SK-N-SH (cell line): ENCODE measurements at regions of chr20 and their contacts with region 1.

Region 1: DNA sequence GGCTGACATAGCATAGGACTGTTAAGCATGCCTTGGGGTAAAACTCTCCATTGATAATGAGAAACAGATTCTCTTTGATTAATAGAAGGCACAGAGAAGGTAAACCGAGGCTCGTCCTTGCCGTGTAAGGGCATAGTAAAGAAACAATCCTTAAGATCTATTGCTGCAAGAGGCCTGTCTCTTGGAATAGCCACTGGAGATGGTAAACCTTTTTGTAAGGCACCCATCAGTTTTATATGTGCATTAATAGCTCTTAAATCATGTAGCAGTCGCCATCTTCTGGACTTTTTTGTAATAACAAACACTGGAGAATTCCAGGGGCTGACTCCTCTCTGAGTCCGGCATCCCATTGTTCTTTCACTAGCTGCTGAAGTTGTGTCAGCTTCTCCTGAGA is 8.4 kb upstream of the ABHD12 start:
- DNase-seq: peak; percentile 68
- H3K4me3 ChIP-seq: no peak overlapping the region
- H3K27ac ChIP-seq: no peak overlapping the region
- H3K4me1 ChIP-seq: 0 out of 4 replicates have a peak, but pooled peaks cover 0 to 3% of the 10 kb centered on the region in 2 experiments
- H3K27me3 ChIP-seq: no peaks in the 10 kb centered on the region
- CTCF ChIP-seq: peak; percentile 71
- EP300 ChIP-seq: no peak
- RAD21 ChIP-seq: peak; percentile 87

Region 2: GRCh38 chr20:25247956-25248785 is 150.9 kb before region 1 on chr20 and contains the start of gene PYGB:
- CTCF ChIA-PET with region 1: interaction called, 28 read pairs
- POLR2A ChIA-PET with region 1: interaction called, 3 read pairs
- DNase-seq: peak; percentile 98
- H3K4me3 ChIP-seq: peak within 1 kb of the TSS; percentile 92 to 98
- H3K27ac ChIP-seq: peak within 1 kb of the TSS; percentile 86 to 93
- H3K4me1 ChIP-seq: peaks cover 11 to 47% of the 10 kb centered on the region in 2 experiments
- H3K27me3 ChIP-seq: no peaks in the 10 kb centered on the region
- CTCF ChIP-seq: no peak
- EP300 ChIP-seq: no peak
- RAD21 ChIP-seq: no peak
- polyA plus RNA-seq, gene PYGB: 32.2 and 35.8 TPM in 2 replicates

Region 3: DNA sequence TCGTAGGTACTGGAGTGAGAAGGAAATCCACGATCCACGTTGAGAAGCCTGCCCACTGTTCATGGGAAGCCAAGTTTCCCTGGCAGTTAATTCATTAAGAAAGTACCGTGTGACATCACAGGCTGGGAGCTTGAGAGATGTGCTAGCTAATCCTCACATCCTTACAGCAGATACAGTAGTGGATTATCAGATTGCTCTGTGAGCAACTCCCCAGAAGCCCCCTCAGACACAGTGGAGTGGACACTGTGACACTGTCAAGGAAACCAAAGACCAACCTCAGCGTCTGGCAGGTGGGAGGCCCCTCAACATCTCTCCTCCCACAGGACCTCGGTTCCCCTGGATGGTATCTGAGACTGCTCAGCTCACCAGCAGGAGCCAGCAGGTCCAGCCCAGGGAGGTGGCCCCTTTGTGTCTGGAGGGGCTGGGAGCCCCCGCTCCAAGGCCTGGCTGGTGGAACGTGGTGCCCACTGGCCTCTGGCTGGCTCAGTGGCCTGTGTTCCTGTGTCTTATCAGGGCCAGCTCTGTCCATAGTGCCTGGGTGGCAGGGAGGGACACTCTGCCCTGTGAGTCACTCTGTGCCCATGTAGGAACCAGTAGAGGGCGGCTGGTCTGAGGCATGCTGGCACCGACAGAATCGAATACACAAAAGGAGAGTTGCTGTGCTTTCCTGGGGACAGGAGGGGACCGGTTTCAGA is 143.9 kb before region 1 on chr20:
- CTCF ChIA-PET with region 1: interaction called, 28 read pairs
- POLR2A ChIA-PET with region 1: interaction called, 3 read pairs
- DNase-seq: peak; percentile 68
- H3K4me3 ChIP-seq: no peak overlapping the region
- H3K27ac ChIP-seq: peak overlapping the region in 1 of 2 experiments; percentile 69; a peak in 2 of 4 replicates
- H3K4me1 ChIP-seq: peaks cover 9 to 54% of the 10 kb centered on the region in 2 experiments
- H3K27me3 ChIP-seq: no peaks in the 10 kb centered on the region
- CTCF ChIP-seq: no peak; the same call in 1 of the 2 replicates
- EP300 ChIP-seq: no peak
- RAD21 ChIP-seq: peak; percentile 42

Region 4: DNA sequence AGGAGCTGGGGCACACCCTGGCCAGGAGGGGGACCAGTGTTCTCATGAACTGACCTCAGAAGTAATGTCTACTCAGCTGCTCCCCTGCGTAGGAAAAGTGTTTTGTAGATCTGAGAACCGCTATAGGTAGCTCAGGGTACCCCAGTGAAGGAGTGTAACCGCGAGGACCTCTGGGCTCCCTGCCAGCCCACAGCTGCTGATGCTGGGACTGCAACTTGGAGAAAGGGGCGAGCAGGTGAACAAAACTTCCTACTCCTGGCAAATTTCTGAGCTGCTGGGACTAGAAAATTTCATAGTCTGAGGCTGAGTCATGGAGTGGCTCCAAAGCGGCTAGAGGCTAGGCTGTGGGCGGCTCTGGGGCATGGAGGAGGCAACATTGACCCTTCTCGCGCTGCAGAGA is 99.2 kb before region 1 on chr20:
- CTCF ChIA-PET with region 1: interaction called, 104 read pairs
- POLR2A ChIA-PET with region 1: no interaction called
- DNase-seq: no peak
- H3K4me3 ChIP-seq: no peak overlapping the region
- H3K27ac ChIP-seq: peak overlapping the region in 1 of 2 experiments; percentile 25; a peak in 1 of 4 replicates
- H3K4me1 ChIP-seq: peaks cover 3 to 18% of the 10 kb centered on the region in 2 experiments; a peak in 1 of 4 replicates
- H3K27me3 ChIP-seq: no peaks in the 10 kb centered on the region
- CTCF ChIP-seq: no peak; the same call in none of the 2 replicates
- EP300 ChIP-seq: no peak
- RAD21 ChIP-seq: no peak

Region 5: DNA sequence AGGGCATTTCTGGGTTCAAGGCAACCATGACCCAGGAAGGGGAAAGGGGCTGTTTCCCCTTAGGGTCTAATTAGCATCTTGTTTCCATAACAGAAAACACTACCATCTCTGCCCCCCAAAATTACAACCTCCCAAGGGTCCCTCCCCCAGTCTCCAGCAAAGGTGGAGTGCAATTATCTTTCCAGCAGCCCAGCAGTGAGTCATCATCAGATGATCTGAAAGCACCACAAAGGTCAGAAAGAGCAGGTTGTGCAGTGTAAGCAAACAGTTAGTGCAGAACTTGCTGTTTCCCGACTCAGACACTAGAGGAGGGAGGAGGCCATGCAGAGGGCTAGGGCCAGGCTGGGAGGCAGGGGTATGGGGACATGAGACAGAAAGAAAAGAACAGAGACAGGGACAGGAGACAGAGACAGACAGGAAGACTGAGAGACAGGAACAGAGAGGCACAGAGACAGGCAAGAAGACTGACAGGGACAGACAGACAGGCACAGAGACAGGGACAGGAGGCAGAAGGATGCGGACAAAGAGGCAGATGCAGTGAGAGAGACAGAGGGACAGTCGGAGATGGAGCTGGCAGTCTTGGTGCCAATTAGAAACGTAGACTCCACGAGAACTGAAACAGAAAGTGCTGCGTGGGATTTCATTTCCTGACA is 88.6 kb before region 1 on chr20:
- CTCF ChIA-PET with region 1: interaction called, 20 read pairs
- POLR2A ChIA-PET with region 1: no interaction called
- DNase-seq: peak; percentile 81
- H3K4me3 ChIP-seq: peak overlapping the region; percentile 20 to 45; a peak in 3 of 4 replicates
- H3K27ac ChIP-seq: peak overlapping the region; percentile 90 to 91
- H3K4me1 ChIP-seq: peaks cover 27 to 35% of the 10 kb centered on the region in 2 experiments; a peak in 3 of 4 replicates
- H3K27me3 ChIP-seq: no peaks in the 10 kb centered on the region
- CTCF ChIP-seq: peak; percentile 61
- EP300 ChIP-seq: peak; percentile 36 to 63; a peak in 2 of 4 replicates
- RAD21 ChIP-seq: peak; percentile 73